Caco-2 (cell line): ENCODE measurements at regions of chr6 and their contacts with region 1.

Region 1: GRCh38 chr6:116561377-116562018 is 7.9 kb downstream of the CALHM4 start:
- DNase-seq: peak; percentile 68 to 73
- H3K4me3 ChIP-seq: no peak overlapping the region
- H3K4me3 Mint-ChIP-seq: no peak overlapping the region
- H3K27ac Mint-ChIP-seq: no peak overlapping the region
- H3K4me1 ChIP-seq: peaks cover 15% of the 10 kb centered on the region
- H3K4me1 Mint-ChIP-seq: peaks cover 26% of the 10 kb centered on the region
- H3K27me3 ChIP-seq: no peaks in the 10 kb centered on the region
- H3K27me3 Mint-ChIP-seq: no peaks in the 10 kb centered on the region
- CTCF ChIP-seq: peak; percentile 70 to 91

Region 2: DNA sequence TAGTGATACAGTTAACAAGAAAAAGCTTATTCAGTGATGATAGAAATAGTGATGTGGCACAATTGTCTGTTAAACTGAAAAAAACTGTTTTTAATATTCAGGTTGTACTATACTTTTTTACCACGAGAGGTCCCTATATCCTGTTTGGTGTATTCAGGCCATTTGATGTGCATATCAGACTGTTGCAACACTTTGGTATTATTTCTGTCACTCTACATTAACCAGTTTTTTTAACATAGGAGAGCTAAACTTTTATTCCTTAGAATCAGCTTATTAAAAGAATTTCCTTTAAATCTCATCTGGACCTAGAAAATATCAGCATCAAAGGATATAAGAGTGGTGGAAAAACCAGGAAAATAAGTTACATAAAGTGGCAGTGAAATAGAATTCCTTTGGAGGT is 344.4 kb before region 1 on chr6:
- CTCF ChIA-PET with region 1: interaction called, 5 read pairs
- POLR2A ChIA-PET with region 1: no interaction called
- intact Hi-C with region 1: loop called (anchors 5 kb)
- DNase-seq: peak in 1 of 2 experiments; percentile 37
- H3K4me3 ChIP-seq: no peak overlapping the region
- H3K4me3 Mint-ChIP-seq: no peak overlapping the region
- H3K27ac Mint-ChIP-seq: no peak overlapping the region
- H3K4me1 ChIP-seq: no peaks in the 10 kb centered on the region
- H3K4me1 Mint-ChIP-seq: no peaks in the 10 kb centered on the region
- H3K27me3 ChIP-seq: no peaks in the 10 kb centered on the region
- H3K27me3 Mint-ChIP-seq: no peaks in the 10 kb centered on the region
- CTCF ChIP-seq: peak; percentile 31 to 48

Region 3: GRCh38 chr6:116287689-116288282 is 273.7 kb before region 1 on chr6:
- CTCF ChIA-PET with region 1: interaction called, 10 read pairs
- POLR2A ChIA-PET with region 1: no interaction called
- intact Hi-C with region 1: loop called (anchors 1 kb)
- DNase-seq: peak in 1 of 2 experiments; percentile 17
- H3K4me3 ChIP-seq: no peak overlapping the region
- H3K4me3 Mint-ChIP-seq: no peak overlapping the region
- H3K27ac Mint-ChIP-seq: no peak overlapping the region
- H3K4me1 ChIP-seq: no peaks in the 10 kb centered on the region
- H3K4me1 Mint-ChIP-seq: no peaks in the 10 kb centered on the region
- H3K27me3 ChIP-seq: no peaks in the 10 kb centered on the region
- H3K27me3 Mint-ChIP-seq: no peaks in the 10 kb centered on the region
- CTCF ChIP-seq: peak; percentile 76 to 81

Region 4: DNA sequence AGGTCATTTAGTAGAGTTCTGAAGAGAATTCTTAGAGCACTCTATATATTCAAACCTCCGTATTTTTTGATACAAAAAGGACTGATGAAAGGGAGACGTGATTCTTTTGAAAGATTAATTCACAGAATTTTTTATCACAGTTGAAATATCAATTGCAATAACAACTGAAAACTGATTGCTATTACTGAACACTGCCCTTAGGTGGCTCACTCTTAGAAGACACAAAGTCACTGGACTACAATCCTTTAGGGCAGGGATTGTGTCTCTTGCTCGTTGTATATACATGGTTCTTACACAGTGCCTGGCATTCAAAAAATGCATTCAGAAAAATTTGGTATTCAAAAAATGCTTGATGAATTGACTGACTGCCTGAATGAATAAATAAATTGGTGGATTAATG is 117.4 kb before region 1 on chr6:
- CTCF ChIA-PET with region 1: interaction called, 4 read pairs
- POLR2A ChIA-PET with region 1: no interaction called
- intact Hi-C with region 1: loop called (anchors 1 kb)
- DNase-seq: no peak
- H3K4me3 ChIP-seq: no peak overlapping the region
- H3K4me3 Mint-ChIP-seq: no peak overlapping the region
- H3K27ac Mint-ChIP-seq: no peak overlapping the region
- H3K4me1 ChIP-seq: no peaks in the 10 kb centered on the region
- H3K4me1 Mint-ChIP-seq: no peaks in the 10 kb centered on the region
- H3K27me3 ChIP-seq: no peaks in the 10 kb centered on the region; the same call in 1 of the 2 replicates
- H3K27me3 Mint-ChIP-seq: peaks cover 16% of the 10 kb centered on the region
- CTCF ChIP-seq: peak; percentile 44 to 48